Ascending aorta (tissue), 2 donors: ENCODE measurements at regions of chr9 and their contacts with region 1.

Region 1: GRCh38 chr9:129460323-129461261 is 160.3 kb downstream of the C9orf50 start:
- DNase-seq: peak; percentile 93 to 99
- H3K4me3 ChIP-seq: peak overlapping the region; percentile 47 to 73
- H3K27ac ChIP-seq: peak overlapping the region; percentile 99
- H3K4me1 ChIP-seq: peaks cover 30 to 51% of the 10 kb centered on the region in 2 donors
- H3K27me3 ChIP-seq: no peaks in the 10 kb centered on the region
- CTCF ChIP-seq: peak in 1 of 3 experiments; percentile 34

Region 2: DNA sequence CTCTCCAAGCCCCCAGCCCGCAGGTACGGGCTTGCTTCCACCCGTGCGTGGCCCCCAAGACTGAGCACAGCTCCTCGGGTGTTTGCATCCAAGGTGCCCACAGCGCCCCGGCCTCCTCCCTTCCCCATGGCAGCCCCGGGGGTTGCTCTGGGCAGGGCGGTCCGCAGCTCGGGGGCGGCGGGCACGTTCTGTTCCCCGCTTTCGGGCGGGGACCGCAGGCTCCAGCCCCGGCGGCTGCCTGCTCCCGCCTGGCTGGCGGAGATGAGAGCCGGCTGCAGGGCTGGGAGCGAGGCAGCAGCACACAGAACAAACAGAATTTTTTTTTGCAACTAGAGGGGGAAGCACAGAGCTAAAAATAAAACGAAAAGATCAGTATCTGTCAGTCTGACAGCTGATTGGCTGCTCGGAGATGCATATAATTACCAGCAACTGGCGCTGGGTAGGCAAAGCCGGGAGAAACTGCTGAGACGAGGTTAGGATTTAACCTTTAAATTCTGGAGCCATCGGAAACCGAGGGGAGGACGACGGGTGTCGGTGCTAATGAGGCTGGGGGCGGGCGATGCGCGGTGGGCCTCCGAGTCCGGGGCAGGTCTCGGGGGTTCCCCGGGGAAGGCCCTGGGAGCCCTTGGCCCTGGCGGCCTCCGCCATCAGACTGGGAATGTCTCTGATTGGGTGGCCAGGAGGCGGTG is 139.9 kb before region 1 on chr9:
- intact Hi-C with region 1: loop called (anchors 5 kb)
- DNase-seq: peak in 1 of 2 donors; percentile 88
- H3K4me3 ChIP-seq: peak overlapping the region; percentile 54 to 60
- H3K27ac ChIP-seq: peak overlapping the region; percentile 92 to 94
- H3K4me1 ChIP-seq: peaks cover 30 to 66% of the 10 kb centered on the region in 2 donors
- H3K27me3 ChIP-seq: no peaks in the 10 kb centered on the region
- CTCF ChIP-seq: peak in 2 of 3 experiments; percentile 2 to 17

Region 3: GRCh38 chr9:129401628-129402370 is 58.8 kb before region 1 on chr9:
- intact Hi-C with region 1: no loop called
- DNase-seq: no peak
- H3K4me3 ChIP-seq: peak overlapping the region in 1 of 2 donors; percentile 35
- H3K27ac ChIP-seq: peak overlapping the region; percentile 53 to 62
- H3K4me1 ChIP-seq: peaks cover 4 to 15% of the 10 kb centered on the region in 2 donors
- H3K27me3 ChIP-seq: no peaks in the 10 kb centered on the region
- CTCF ChIP-seq: no peak

Region 4: GRCh38 chr9:129413537-129414376 is 46.8 kb before region 1 on chr9:
- intact Hi-C with region 1: loop called (anchors 1 kb)
- DNase-seq: peak; percentile 96 to 99
- H3K4me3 ChIP-seq: peak overlapping the region; percentile 72 to 82
- H3K27ac ChIP-seq: peak overlapping the region; percentile 99 to 100
- H3K4me1 ChIP-seq: peaks cover 12 to 28% of the 10 kb centered on the region in 2 donors
- H3K27me3 ChIP-seq: no peaks in the 10 kb centered on the region
- CTCF ChIP-seq: peak in 2 of 3 experiments; percentile 2 to 26

Region 5: DNA sequence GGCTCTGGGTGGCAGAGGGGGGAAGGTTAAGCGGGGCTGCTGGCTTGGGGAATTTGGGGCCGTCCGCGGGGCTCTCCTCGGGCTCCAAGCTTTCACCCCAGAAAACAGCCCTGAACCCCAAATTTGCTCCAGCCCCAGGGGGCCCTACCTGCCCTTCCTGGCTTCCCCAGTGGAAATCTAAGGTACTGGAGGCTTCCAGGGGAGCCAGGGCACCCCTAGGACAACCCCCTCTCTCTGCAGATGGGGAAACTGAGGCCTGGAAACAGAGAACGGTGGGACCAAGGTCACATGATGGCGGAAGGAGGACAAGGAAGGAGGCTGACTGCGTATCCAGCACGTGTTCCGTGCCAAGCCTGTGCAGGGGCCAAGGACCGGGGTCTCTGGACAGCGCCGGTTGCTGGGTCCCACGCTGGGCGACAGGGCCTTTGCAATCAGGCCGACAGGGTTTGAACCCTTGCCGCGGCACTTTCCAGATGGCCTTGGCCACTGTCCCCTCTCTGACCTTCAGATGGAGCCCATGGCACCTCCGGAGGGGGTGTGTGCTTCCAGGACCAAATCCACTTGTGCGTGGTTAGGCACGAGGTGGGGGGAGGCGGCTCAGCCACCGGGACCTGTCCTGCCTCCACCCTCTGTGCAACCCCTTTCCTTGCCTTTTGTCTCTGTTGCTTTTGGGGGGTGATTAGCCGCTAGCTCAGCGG is 22.8 kb before region 1 on chr9:
- intact Hi-C with region 1: loop called (anchors 1 kb)
- DNase-seq: no peak
- H3K4me3 ChIP-seq: peak overlapping the region; percentile 77 to 85
- H3K27ac ChIP-seq: peak overlapping the region; percentile 83 to 87
- H3K4me1 ChIP-seq: peaks cover 9 to 17% of the 10 kb centered on the region in 2 donors
- H3K27me3 ChIP-seq: no peaks in the 10 kb centered on the region
- CTCF ChIP-seq: peak in 1 of 3 experiments; percentile 7

Region 6: GRCh38 chr9:129482521-129483414 is 22.2 kb after region 1 on chr9:
- intact Hi-C with region 1: loop called (anchors 1 kb)
- DNase-seq: peak in 1 of 2 donors; percentile 93
- H3K4me3 ChIP-seq: peak overlapping the region; percentile 54 to 63
- H3K27ac ChIP-seq: peak overlapping the region; percentile 98 to 100
- H3K4me1 ChIP-seq: peaks cover 32 to 64% of the 10 kb centered on the region in 2 donors
- H3K27me3 ChIP-seq: no peaks in the 10 kb centered on the region
- CTCF ChIP-seq: peak in 1 of 3 experiments; percentile 19

Region 7: DNA sequence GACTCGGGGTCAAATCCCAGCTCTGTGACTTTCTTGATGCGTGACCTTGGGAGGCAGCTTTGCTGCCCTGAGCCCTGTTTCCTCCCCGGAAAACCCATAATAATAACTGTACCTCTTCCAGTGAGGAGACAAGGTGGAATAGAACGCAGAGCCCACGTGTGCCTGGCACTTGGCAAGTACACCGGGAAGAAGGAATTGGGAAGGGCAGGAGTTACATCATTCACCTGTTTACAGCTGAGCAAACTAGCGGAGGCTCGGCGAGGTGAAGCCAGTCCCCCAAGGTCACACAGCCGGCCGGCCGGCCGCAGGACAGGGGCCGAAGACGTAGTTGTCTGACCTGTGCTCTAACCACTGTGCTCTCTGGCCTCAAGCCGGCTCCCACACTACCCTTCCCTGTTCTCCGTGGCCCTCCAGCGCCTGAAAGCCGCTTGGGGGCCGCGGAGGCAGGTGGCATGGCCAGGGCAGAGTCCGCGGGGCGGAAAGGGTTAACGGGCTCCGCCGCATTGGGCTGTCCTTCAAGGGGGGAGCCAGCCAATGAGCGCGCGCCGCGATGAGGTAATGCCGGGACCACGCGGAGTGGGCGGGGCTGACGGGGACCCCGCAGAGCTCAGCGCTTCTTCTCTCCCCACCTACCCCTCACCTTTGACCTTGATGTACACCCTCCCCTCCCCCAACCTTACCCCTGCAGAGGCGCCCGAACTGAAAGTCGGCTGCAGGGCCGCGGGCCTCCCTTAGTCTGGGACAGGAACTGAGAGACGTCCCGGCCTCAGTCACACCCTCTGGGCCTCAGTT is 35.1 kb after region 1 on chr9:
- intact Hi-C with region 1: loop called (anchors 5 kb)
- DNase-seq: peak; percentile 68 to 96
- H3K4me3 ChIP-seq: peak overlapping the region; percentile 68 to 72
- H3K27ac ChIP-seq: peak overlapping the region; percentile 98 to 100
- H3K4me1 ChIP-seq: peaks cover 15 to 62% of the 10 kb centered on the region in 2 donors
- H3K27me3 ChIP-seq: no peaks in the 10 kb centered on the region
- CTCF ChIP-seq: no peak

Region 8: DNA sequence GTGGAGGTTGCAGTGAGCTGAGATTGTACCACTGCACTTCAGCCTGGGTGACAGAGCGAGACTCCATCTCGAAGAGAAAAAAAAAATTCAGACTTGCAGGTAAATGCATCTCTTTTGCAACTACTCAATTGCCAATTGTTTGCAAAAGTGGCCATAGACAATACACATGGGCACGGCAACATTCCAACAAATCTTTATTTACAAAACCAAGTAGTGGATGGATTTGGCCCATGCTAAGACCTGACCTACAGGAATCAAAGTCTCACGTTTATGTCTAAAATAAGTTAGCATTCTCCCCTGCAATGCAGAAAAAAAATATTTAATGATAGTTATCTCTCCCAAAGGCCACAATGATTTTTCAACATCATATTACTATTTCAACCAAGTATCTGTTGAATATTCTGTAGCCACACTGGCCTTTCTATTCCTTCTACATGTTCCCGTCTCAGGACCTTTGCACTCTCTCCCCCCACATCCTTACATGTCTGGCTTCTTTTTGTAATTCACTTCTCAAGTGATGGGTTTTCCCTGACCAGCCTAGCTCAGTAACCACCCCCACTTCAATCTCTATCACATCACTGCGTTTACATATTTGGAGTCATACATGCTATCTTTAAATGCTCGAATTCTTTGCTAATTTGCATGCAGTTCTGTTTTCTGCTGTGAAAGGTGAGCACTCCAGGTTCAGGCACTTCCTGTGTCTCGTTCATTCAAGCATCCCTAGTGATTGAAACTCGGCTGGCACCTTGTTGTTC is 528.2 kb after region 1 on chr9:
- intact Hi-C with region 1: no loop called
- DNase-seq: peak in 1 of 2 donors; percentile 18
- H3K4me3 ChIP-seq: no peak overlapping the region
- H3K27ac ChIP-seq: no peak overlapping the region
- H3K4me1 ChIP-seq: peaks cover 0 to 9% of the 10 kb centered on the region in 2 donors
- H3K27me3 ChIP-seq: no peaks in the 10 kb centered on the region
- CTCF ChIP-seq: no peak